MCF 10A (cell line): ENCODE measurements at regions of chr5 and their contacts with region 1.

Region 1: GRCh38 chr5:38871790-38872551 is 26.2 kb downstream of the OSMR start:
- DNase-seq: peak; percentile 98
- H3K4me3 Mint-ChIP-seq: peak overlapping the region; percentile 48
- H3K27ac Mint-ChIP-seq: peak overlapping the region; percentile 95
- H3K4me1 Mint-ChIP-seq: peaks cover 33% of the 10 kb centered on the region
- H3K27me3 Mint-ChIP-seq: no peaks in the 10 kb centered on the region
- CTCF ChIP-seq: no peak

Region 2: GRCh38 chr5:38373743-38374142 is 498.2 kb before region 1 on chr5:
- CTCF ChIA-PET with region 1: no interaction called
- POLR2A ChIA-PET with region 1: no interaction called
- intact Hi-C with region 1: no loop called
- DNase-seq: no peak
- H3K4me3 Mint-ChIP-seq: no peak overlapping the region
- H3K27ac Mint-ChIP-seq: no peak overlapping the region
- H3K4me1 Mint-ChIP-seq: no peaks in the 10 kb centered on the region
- H3K27me3 Mint-ChIP-seq: peaks cover 18% of the 10 kb centered on the region
- CTCF ChIP-seq: no peak

Region 3: GRCh38 chr5:38853753-38854463 is 18.1 kb before region 1 on chr5:
- CTCF ChIA-PET with region 1: interaction called, 3 read pairs
- POLR2A ChIA-PET with region 1: interaction called, 179 read pairs
- intact Hi-C with region 1: no loop called
- DNase-seq: peak; percentile 78
- H3K4me3 Mint-ChIP-seq: peak overlapping the region; percentile 47
- H3K27ac Mint-ChIP-seq: peak overlapping the region; percentile 69
- H3K4me1 Mint-ChIP-seq: peaks cover 31% of the 10 kb centered on the region
- H3K27me3 Mint-ChIP-seq: no peaks in the 10 kb centered on the region
- CTCF ChIP-seq: no peak